ENCODE measurements at regions of chr12 and their contacts with region 1.

Region 1: GRCh38 chr12:7832059-7832696 is 40.5 kb downstream of the SLC2A14 start:
- DNase-seq: peak; percentile 62
- ATAC-seq: peak; percentile 85
- H3K4me3 ChIP-seq: no peak overlapping the region
- H3K27ac ChIP-seq: peak overlapping the region; percentile 17
- H3K4me1 ChIP-seq: peaks cover 41% of the 10 kb centered on the region
- H3K27me3 ChIP-seq: no peaks in the 10 kb centered on the region
- CTCF ChIP-seq: peak; percentile 62
- EP300 ChIP-seq: no peak
- POLR2A ChIP-seq: no peak
- RAD21 ChIP-seq: peak; percentile 61

Region 2: DNA sequence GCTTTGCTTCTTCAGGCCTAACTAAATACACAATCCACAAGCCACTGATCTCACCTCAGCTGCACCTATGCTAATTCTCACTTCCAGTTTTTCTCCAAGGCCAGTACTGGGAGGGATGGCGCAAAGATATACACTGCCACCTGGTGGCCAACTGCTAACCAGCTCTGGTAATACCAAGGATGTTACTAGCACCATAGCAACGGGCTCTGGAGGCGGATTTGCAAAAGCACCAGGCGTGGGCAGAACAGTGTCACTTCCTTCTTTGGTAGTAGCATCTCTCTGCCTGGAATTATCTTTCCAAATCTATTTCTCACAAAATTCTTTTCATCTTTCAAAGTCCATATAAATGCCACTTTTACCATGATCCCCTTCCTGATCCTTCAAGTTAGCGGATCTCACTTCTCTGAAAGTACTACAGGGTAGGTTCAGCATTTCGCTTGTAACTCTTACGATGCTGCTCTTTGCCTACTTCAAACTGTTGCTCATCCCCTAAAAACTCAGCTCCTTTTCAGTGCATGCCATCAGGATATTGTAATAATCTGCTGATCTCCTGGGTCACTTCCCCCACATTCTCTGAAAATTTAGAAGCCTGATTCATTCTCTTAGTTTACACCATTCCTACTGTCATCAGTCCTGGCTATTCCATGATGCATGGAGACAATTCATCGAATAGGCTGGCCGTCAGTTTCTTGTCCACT is 163.2 kb after region 1 on chr12:
- CTCF ChIA-PET with region 1: interaction called, 11 read pairs
- POLR2A ChIA-PET with region 1: no interaction called
- in situ Hi-C with region 1: no loop called
- intact Hi-C with region 1: no loop called
- DNase-seq: peak; percentile 77
- ATAC-seq: peak; percentile 100
- H3K4me3 ChIP-seq: no peak overlapping the region
- H3K27ac ChIP-seq: no peak overlapping the region
- H3K4me1 ChIP-seq: peaks cover 31% of the 10 kb centered on the region
- H3K27me3 ChIP-seq: no peaks in the 10 kb centered on the region
- CTCF ChIP-seq: peak; percentile 82
- EP300 ChIP-seq: no peak
- POLR2A ChIP-seq: no peak
- RAD21 ChIP-seq: peak; percentile 87

Measured in HepG2 (cell line).